A549 (cell line): ENCODE measurements at regions of chr20 and their contacts with region 1.

Region 1: DNA sequence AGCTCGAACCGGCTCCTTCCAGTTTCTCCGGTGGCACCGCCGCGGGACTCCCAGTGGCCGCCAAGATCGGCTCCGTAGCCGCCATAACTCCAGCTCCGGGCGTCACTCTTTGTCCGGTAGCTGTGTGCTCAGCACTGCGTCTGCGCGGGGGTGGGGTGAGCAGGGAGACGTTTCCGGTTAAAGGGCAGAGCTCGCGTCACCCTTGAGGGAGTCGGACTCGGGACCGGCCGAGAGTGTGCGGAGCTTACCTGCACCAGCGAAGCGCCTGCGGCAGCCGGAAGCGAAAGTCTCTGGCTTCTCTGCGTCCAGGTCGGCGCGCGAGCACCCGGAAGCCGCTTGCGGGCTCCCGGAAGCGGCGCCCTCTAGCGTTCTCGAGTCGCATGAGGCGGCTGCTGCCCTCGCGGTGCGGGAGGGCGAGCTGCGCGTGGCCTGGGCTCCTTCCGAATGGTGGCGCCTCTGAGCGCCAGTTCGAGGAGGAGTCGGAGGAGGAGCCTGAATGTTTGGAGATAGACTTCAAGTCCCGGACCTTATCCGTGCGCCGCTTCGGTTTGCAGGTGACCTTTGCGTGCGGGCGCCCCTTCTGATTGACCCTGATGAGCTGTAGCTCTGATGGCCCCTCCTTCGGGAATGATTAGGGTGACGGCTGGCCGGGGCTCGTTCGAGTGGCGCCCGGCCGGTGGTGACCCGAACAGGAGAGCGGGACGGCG is at the start of gene SCAND1:
- DNase-seq: peak; percentile 95 to 99
- ATAC-seq: peak; percentile 94
- H3K4me3 ChIP-seq: peak within 1 kb of the TSS; percentile 95
- H3K27ac ChIP-seq: peak within 1 kb of the TSS; percentile 96 to 97
- H3K4me1 ChIP-seq: peaks cover 15% of the 10 kb centered on the region
- CTCF ChIP-seq: peak; percentile 99
- EP300 ChIP-seq: no peak
- POLR2A ChIP-seq: peak; percentile 85
- RAD21 ChIP-seq: peak; percentile 46 to 69; a peak in 4 of 5 replicates
- polyA plus RNA-seq, gene SCAND1: 9.1 and 10.2 TPM in 2 replicates

Region 2: DNA sequence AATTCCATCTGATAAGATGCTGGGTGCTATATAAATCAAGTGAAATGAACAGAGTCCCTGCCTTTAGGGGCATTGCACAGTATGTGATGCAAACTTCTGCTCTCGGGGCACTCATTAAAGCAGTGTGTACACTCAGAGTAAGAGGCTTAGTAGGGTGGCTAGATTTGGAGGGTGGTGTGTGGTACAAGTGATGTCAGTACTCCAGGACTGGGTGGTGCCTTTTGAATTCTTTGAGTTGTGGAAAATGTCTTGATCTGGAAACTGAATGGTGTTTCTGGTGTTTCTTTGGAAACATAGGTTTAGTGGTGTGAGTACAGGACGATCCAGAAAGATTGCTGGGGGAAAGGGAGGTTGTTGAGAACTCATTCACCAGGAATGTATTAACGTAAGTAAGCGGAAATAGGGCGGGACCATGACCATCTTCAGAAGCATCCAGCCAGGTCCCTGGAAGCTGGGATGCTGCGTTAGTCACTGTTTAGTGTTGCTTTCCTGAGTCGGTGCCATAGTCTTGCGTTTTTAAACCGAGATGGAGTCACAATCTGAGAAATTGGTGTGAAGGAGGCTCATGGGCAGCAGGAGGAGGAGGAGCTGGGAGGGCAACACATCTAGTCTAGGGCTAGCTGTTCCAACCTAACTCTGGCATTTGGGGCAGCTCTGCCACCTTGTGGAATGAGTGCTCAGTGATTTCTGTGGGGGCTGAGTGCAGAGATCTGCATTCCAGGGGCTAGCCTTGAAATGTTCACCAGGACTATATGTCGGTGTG is 70.4 kb before region 1 on chr20:
- CTCF ChIA-PET with region 1: interaction called, 4 read pairs
- POLR2A ChIA-PET with region 1: interaction called, 10 read pairs
- DNase-seq: peak; percentile 84 to 97
- ATAC-seq: peak; percentile 93 to 97
- H3K4me3 ChIP-seq: peak overlapping the region; percentile 15
- H3K27ac ChIP-seq: peak overlapping the region; percentile 90 to 93
- H3K4me1 ChIP-seq: peaks cover 58% of the 10 kb centered on the region
- CTCF ChIP-seq: peak; percentile 89
- EP300 ChIP-seq: peak; percentile 30 to 79; a peak in 2 of 5 replicates
- POLR2A ChIP-seq: no peak
- RAD21 ChIP-seq: peak; percentile 91 to 93

Region 3: GRCh38 chr20:35942243-35942642 is 12.1 kb before region 1 on chr20:
- CTCF ChIA-PET with region 1: interaction called, 52 read pairs
- POLR2A ChIA-PET with region 1: interaction called, 10 read pairs
- DNase-seq: no peak
- ATAC-seq: no peak
- H3K4me3 ChIP-seq: no peak overlapping the region
- H3K27ac ChIP-seq: no peak overlapping the region
- H3K4me1 ChIP-seq: no peaks in the 10 kb centered on the region
- CTCF ChIP-seq: no peak
- EP300 ChIP-seq: no peak
- POLR2A ChIP-seq: no peak
- RAD21 ChIP-seq: no peak

Region 4: GRCh38 chr20:35978041-35978513 is 23.7 kb after region 1 on chr20:
- CTCF ChIA-PET with region 1: interaction called, 23 read pairs
- POLR2A ChIA-PET with region 1: interaction called, 3 read pairs
- DNase-seq: no peak
- ATAC-seq: no peak
- H3K4me3 ChIP-seq: no peak overlapping the region
- H3K27ac ChIP-seq: peak overlapping the region; percentile 8 to 28; a peak in 3 of 6 replicates
- H3K4me1 ChIP-seq: peaks cover 13% of the 10 kb centered on the region; the same call in 2 of the 3 replicates
- CTCF ChIP-seq: no peak
- EP300 ChIP-seq: no peak
- POLR2A ChIP-seq: no peak
- RAD21 ChIP-seq: no peak

Region 5: GRCh38 chr20:36098364-36098763 is 144.0 kb after region 1 on chr20:
- CTCF ChIA-PET with region 1: interaction called, 10 read pairs
- POLR2A ChIA-PET with region 1: no interaction called
- DNase-seq: no peak
- ATAC-seq: no peak
- H3K4me3 ChIP-seq: no peak overlapping the region
- H3K27ac ChIP-seq: peak overlapping the region; percentile 66 to 70; a peak in 5 of 6 replicates
- H3K4me1 ChIP-seq: peaks cover 63% of the 10 kb centered on the region
- CTCF ChIP-seq: no peak
- EP300 ChIP-seq: no peak
- POLR2A ChIP-seq: no peak
- RAD21 ChIP-seq: no peak

Region 6: GRCh38 chr20:36847009-36847709 is 892.8 kb after region 1 on chr20:
- CTCF ChIA-PET with region 1: no interaction called
- POLR2A ChIA-PET with region 1: interaction called, 12 read pairs
- DNase-seq: no peak
- ATAC-seq: no peak
- H3K4me3 ChIP-seq: no peak overlapping the region
- H3K27ac ChIP-seq: peak overlapping the region in 1 of 2 experiments; percentile 71; a peak in 2 of 6 replicates
- H3K4me1 ChIP-seq: peaks cover 30% of the 10 kb centered on the region
- CTCF ChIP-seq: no peak
- EP300 ChIP-seq: no peak
- POLR2A ChIP-seq: no peak
- RAD21 ChIP-seq: no peak